WTC11 (cell line): ENCODE measurements at regions of chr12 and their contacts with region 1.

Region 1: GRCh38 chr12:53907103-53907502 is 31.5 kb upstream of the HOXC13 start:
- DNase-seq: no peak
- ATAC-seq: no peak
- H3K4me3 Mint-ChIP-seq: no peak overlapping the region
- H3K27ac Mint-ChIP-seq: no peak overlapping the region
- H3K4me1 Mint-ChIP-seq: no peaks in the 10 kb centered on the region
- H3K27me3 Mint-ChIP-seq: peaks cover 32% of the 10 kb centered on the region
- CTCF ChIP-seq: no peak

Region 2: GRCh38 chr12:53867216-53868001 is 39.7 kb before region 1 on chr12:
- CTCF ChIA-PET with region 1: no interaction called
- POLR2A ChIA-PET with region 1: no interaction called
- DNase-seq: peak; percentile 53
- ATAC-seq: peak; percentile 80
- H3K4me3 Mint-ChIP-seq: no peak overlapping the region
- H3K27ac Mint-ChIP-seq: peak overlapping the region; percentile 67; the same call in 1 of the 2 replicates
- H3K4me1 Mint-ChIP-seq: peaks cover 6% of the 10 kb centered on the region
- H3K27me3 Mint-ChIP-seq: peaks cover 2% of the 10 kb centered on the region; the same call in 1 of the 2 replicates
- CTCF ChIP-seq: no peak

Region 3: DNA sequence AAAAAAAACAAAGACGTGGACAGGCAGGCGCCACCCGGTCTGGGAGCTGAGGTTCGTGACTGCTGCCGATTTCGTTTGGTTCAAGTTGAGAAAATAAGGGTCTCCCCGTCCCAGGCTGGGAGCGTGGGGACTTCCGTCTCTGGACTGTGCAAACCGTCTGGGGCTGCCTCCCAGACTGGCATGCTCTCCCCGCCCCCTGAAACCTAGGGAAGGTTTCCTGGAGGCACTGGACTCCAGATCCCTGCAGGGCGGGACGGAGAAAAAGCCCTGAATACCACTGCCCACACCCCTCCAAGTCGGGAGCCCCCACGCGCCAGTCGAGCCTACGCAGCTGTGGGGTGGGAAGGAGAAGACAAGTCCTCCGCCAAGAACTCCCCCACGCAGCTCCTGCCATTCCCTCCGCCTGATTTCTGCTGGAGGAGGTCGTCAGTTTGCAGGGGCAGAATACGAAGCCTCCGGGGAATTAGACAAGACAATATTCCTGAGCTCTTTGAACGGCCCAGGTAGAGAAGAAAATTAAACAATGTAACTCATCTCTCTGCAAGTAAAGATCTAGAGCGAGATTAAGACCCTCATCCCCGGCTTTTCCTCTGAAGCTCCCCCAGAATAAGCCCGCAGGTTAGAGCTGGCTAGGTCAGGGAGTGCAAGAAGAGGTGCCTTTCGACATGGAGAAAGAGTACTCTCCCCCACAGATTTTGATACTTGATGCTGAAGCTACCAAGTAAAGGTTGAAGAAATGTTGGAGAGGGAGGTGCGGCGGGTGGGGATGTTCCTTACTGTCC is 21.1 kb after region 1 on chr12:
- CTCF ChIA-PET with region 1: no interaction called
- POLR2A ChIA-PET with region 1: interaction called, 15 read pairs
- DNase-seq: peak; percentile 17
- ATAC-seq: peak; percentile 36
- H3K4me3 Mint-ChIP-seq: peak overlapping the region; percentile 36; the same call in 1 of the 2 replicates
- H3K27ac Mint-ChIP-seq: no peak overlapping the region
- H3K4me1 Mint-ChIP-seq: peaks cover 11% of the 10 kb centered on the region
- H3K27me3 Mint-ChIP-seq: peaks cover 100% of the 10 kb centered on the region
- CTCF ChIP-seq: no peak